ENCODE measurements at regions of chr12 and their contacts with region 1.

Region 1: GRCh38 chr12:10771132-10771733 is 31.2 kb downstream of the TAS2R7 start:
- DNase-seq: no peak
- ATAC-seq: no peak
- H3K4me3 Mint-ChIP-seq: no peak overlapping the region
- H3K27ac Mint-ChIP-seq: no peak overlapping the region
- H3K4me1 Mint-ChIP-seq: no peaks in the 10 kb centered on the region
- H3K27me3 Mint-ChIP-seq: peaks cover 57% of the 10 kb centered on the region

Region 2: GRCh38 chr12:10740182-10740581 is 31.1 kb before region 1 on chr12:
- CTCF ChIA-PET with region 1: no interaction called
- POLR2A ChIA-PET with region 1: no interaction called
- DNase-seq: no peak
- ATAC-seq: no peak
- H3K4me3 Mint-ChIP-seq: no peak overlapping the region
- H3K27ac Mint-ChIP-seq: no peak overlapping the region
- H3K4me1 Mint-ChIP-seq: no peaks in the 10 kb centered on the region
- H3K27me3 Mint-ChIP-seq: peaks cover 39% of the 10 kb centered on the region

Region 3: GRCh38 chr12:11202811-11203210 is 431.6 kb after region 1 on chr12:
- CTCF ChIA-PET with region 1: interaction called, 37 read pairs
- POLR2A ChIA-PET with region 1: no interaction called
- DNase-seq: no peak
- ATAC-seq: no peak
- H3K4me3 Mint-ChIP-seq: no peak overlapping the region
- H3K27ac Mint-ChIP-seq: no peak overlapping the region
- H3K4me1 Mint-ChIP-seq: no peaks in the 10 kb centered on the region
- H3K27me3 Mint-ChIP-seq: no peaks in the 10 kb centered on the region

Measured in activated CD8-positive, alpha-beta T cell treated with anti-CD3 and anti-CD28 coated beads, Interleukin-2, amount 10 ng/mL, durations not matched to agents 7 days and 5 days (primary cell).